PC-9 (cell line): ENCODE measurements at regions of chr12 and their contacts with region 1.

Region 1: GRCh38 chr12:76003355-76003638 is 28.3 kb downstream of the PHLDA1 start:
- DNase-seq: no peak
- H3K4me3 ChIP-seq: no peak overlapping the region
- H3K27ac ChIP-seq: no peak overlapping the region
- H3K4me1 ChIP-seq: peaks cover 13% of the 10 kb centered on the region
- H3K27me3 ChIP-seq: no peaks in the 10 kb centered on the region
- CTCF ChIP-seq: no peak

Region 2: GRCh38 chr12:75542942-75543341 is 460.4 kb before region 1 on chr12:
- CTCF ChIA-PET with region 1: no interaction called
- POLR2A ChIA-PET with region 1: interaction called, 10 read pairs
- intact Hi-C with region 1: no loop called
- DNase-seq: no peak
- H3K4me3 ChIP-seq: no peak overlapping the region
- H3K27ac ChIP-seq: no peak overlapping the region
- H3K4me1 ChIP-seq: no peaks in the 10 kb centered on the region
- H3K27me3 ChIP-seq: no peaks in the 10 kb centered on the region
- CTCF ChIP-seq: no peak

Region 3: DNA sequence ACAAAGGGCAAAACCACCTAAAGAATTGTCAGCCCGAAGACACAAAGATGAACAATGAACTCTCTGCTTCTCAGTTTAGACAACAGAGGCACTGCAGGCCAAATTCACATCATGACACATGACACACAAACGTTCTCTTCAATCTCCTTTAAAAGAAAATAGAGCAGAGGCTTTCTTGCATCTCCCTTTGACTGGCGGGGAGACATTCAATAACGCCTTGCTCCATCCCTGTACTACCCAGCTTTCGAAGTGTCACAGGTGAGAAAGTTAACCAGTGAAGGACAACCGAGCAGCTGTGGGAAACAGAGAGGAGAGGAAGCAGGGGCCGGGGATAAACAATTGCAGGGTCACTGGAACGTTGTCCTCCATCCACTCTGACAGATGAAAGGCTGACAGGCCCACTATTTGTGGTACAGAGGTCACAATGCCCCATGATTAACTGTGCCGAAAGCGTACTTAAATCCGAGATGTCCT is 102.5 kb before region 1 on chr12:
- CTCF ChIA-PET with region 1: no interaction called
- POLR2A ChIA-PET with region 1: no interaction called
- intact Hi-C with region 1: no loop called
- DNase-seq: no peak
- H3K4me3 ChIP-seq: no peak overlapping the region
- H3K27ac ChIP-seq: no peak overlapping the region
- H3K4me1 ChIP-seq: no peaks in the 10 kb centered on the region
- H3K27me3 ChIP-seq: no peaks in the 10 kb centered on the region
- CTCF ChIP-seq: no peak